Transverse colon (tissue), 4 donors: ENCODE measurements at regions of chr5 and their contacts with region 1.

Region 1: GRCh38 chr5:43040287-43041098 is at the start of gene ANXA2R:
- DNase-seq: peak; percentile 94
- H3K4me3 ChIP-seq: peak within 1 kb of the TSS; percentile 52 to 79 (median 64)
- H3K27ac ChIP-seq: peak within 1 kb of the TSS; percentile 91 to 98 (median 94)
- H3K4me1 ChIP-seq: peaks cover 0 to 57% (median 24%) of the 10 kb centered on the region in 4 donors
- H3K27me3 ChIP-seq: peaks cover 75% of the 10 kb centered on the region
- CTCF ChIP-seq: peak; percentile 80 to 90 (median 89)
- EP300 ChIP-seq: no peak
- POLR2A ChIP-seq: peak; percentile 51
- total RNA-seq, gene ANXA2R: 0.75 to 4.4 (median 2.0) TPM

Region 2: DNA sequence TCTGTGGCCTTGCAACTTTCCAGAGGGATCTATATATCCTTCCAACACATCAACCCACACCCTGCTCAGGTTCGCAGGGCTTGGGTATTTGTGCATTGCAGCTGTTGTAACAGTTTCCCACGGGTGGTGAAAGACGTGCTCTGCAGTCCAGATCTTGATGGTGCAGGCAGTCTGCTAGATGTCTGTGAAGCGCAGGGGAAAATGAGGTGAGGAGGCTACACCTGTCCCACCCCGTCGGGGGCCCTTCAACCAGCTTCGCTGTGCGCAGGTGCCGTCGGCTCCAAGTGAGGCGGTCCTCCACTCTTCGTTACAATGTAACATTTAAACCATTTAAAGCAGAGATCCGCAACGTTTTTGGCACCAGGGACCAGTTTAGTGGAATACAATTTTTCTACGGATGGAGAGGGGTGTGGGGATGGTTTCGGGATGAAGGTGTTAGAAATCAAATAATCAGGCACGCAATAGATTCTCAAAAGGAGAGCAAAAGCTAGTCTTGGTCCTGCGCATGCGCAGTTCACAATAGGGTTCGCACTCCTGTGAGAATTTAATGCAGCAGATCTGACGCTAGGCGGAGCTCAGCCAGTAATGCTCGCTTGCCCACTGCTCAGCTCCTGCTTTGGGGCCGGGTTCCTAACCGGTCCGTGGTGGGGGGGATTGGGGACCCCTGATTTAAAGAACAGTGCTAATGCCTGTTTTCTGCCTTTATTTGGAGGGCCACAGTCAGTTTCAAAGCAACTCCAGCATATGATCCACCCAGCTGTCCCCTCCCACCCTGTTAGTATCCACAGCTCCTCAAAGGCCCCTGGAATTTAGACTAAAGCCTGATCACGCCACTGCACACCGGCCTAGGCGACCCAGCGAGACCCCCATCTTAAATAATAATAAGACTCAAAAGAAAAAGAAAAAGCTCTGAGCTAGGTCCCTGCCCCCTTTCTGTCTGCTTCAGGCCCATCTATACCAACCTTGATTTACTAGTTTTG is 131.7 kb before region 1 on chr5:
- in situ Hi-C with region 1: loop called in 1 of 4 experiments (anchors 10 kb)
- intact Hi-C with region 1: no loop called
- DNase-seq: peak; percentile 91
- H3K4me3 ChIP-seq: peak overlapping the region; percentile 16 to 46 (median 30)
- H3K27ac ChIP-seq: no peak overlapping the region
- H3K4me1 ChIP-seq: peaks cover 0 to 7% (median 3%) of the 10 kb centered on the region in 4 donors
- H3K27me3 ChIP-seq: peaks cover 37% of the 10 kb centered on the region
- CTCF ChIP-seq: peak; percentile 78 to 89 (median 84)
- EP300 ChIP-seq: no peak
- POLR2A ChIP-seq: no peak

Region 3: GRCh38 chr5:42994246-42995151 is 46.0 kb before region 1 on chr5:
- in situ Hi-C with region 1: loop called in 2 of 4 experiments (anchors 10 kb)
- intact Hi-C with region 1: no loop called
- DNase-seq: peak; percentile 91
- H3K4me3 ChIP-seq: peak overlapping the region; percentile 1 to 81 (median 18)
- H3K27ac ChIP-seq: peak overlapping the region; percentile 88 to 95 (median 92)
- H3K4me1 ChIP-seq: peaks cover 0 to 34% (median 10%) of the 10 kb centered on the region in 4 donors
- H3K27me3 ChIP-seq: peaks cover 100% of the 10 kb centered on the region
- CTCF ChIP-seq: peak; percentile 82 to 94 (median 90)
- EP300 ChIP-seq: no peak
- POLR2A ChIP-seq: peak; percentile 44

Region 4: DNA sequence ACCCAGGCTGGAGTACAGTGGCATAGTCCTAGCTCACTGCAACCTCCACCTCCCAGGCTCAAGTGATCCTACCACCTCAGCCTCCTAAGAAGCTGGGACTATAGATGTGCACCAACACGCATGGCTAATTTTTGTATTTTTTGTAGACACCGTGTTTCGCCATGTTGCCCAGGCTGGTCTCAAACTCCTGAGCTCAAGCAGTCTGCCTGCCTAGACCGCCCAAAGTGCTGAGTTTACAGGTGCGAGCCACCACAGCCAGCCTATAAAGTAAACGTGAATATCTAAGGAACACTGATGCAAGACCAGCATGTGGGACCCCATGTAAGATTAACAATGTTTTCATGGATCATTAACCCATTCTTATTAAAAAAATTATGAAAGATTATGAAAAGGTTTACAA is 16.3 kb before region 1 on chr5:
- in situ Hi-C with region 1: no loop called
- intact Hi-C with region 1: loop called (anchors 1 kb)
- DNase-seq: no peak
- H3K4me3 ChIP-seq: no peak overlapping the region
- H3K27ac ChIP-seq: no peak overlapping the region
- H3K4me1 ChIP-seq: peaks cover 0 to 7% (median under 1%) of the 10 kb centered on the region in 4 donors
- H3K27me3 ChIP-seq: peaks cover 54% of the 10 kb centered on the region
- CTCF ChIP-seq: no peak
- EP300 ChIP-seq: no peak
- POLR2A ChIP-seq: no peak